ENCODE measurements at regions of chr6 and their contacts with region 1.

Region 1: GRCh38 chr6:132279592-132280139 is 121.6 kb downstream of the MOXD1 start:
- DNase-seq: peak; percentile 65 to 84
- ATAC-seq: peak; percentile 85 to 95 (median 94)
- H3K4me3 ChIP-seq: peak overlapping the region; percentile 19
- H3K4me3 Mint-ChIP-seq: peak overlapping the region; percentile 90
- H3K27ac ChIP-seq: no peak overlapping the region
- H3K27ac Mint-ChIP-seq: peak overlapping the region in 1 of 2 donors; percentile 47
- H3K4me1 ChIP-seq: no peaks in the 10 kb centered on the region
- H3K4me1 Mint-ChIP-seq: peaks cover 0 to 5% of the 10 kb centered on the region in 2 donors
- H3K27me3 ChIP-seq: peaks cover 3% of the 10 kb centered on the region
- H3K27me3 Mint-ChIP-seq: peaks cover 27 to 34% of the 10 kb centered on the region in 2 donors
- CTCF ChIP-seq: peak; percentile 99

Region 2: DNA sequence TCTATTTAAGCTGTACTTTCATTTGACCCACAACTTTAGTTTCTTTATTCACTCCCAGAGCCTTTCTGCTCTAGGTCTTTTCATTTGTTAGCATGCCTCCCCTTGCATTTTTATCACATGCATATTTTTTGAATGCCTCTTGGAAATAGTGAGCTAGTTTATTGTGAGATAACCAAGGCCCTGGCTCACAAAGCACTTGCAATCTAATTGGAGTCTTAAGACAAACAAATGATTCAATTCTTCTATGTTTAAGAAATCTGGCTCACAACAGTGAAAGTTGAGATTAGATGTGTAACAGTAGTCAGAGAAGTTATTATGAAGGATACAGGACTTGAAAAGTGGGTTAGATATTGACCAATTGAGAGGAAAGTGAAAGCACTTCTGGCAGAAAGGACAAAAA is 51.8 kb before region 1 on chr6:
- intact Hi-C with region 1: no loop called
- DNase-seq: no peak
- ATAC-seq: no peak
- H3K4me3 ChIP-seq: no peak overlapping the region
- H3K4me3 Mint-ChIP-seq: no peak overlapping the region
- H3K27ac ChIP-seq: no peak overlapping the region
- H3K27ac Mint-ChIP-seq: no peak overlapping the region
- H3K4me1 ChIP-seq: no peaks in the 10 kb centered on the region
- H3K4me1 Mint-ChIP-seq: no peaks in the 10 kb centered on the region
- H3K27me3 ChIP-seq: peaks cover 3% of the 10 kb centered on the region
- H3K27me3 Mint-ChIP-seq: no peaks in the 10 kb centered on the region
- CTCF ChIP-seq: no peak

Region 3: DNA sequence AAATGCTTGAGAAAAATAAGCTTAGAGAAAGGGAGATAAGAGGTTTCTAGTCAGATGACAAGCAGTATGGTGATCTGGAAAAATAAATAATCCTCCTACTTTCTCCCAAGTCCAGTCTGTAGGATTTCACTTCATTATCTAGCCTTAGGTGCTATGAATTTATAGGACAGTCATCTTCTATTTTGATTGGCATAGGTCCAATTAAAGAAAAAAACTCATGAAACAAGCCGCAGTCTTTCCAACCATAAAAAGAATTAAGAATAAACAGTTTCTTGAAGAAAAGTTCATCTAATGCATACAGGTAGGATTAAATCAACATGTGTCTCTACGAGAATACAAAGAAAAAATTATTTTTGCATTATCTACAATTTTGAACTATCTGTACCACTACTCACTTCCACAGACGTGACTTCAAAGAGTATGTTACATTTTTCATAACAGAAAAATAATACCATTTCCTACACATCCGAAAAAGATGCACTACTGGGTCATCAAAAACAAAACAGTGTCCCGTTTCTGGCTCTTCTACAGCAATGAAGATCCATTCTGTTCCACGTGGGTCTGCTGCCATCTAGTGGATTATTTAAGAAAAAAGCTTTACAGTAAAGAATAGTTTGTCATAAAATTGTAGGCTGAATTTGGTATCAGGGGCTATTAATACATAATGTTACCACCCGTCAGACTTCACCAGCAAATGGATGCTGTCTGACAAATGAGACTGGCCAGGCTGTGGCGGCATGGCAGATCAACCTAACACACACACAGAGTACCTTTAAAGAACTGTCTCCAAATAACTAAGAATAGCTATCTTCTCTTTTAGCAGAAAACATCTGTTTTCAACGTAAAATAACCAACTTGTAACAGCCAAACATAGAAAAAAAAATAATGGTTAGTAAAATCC is 204.4 kb after region 1 on chr6:
- intact Hi-C with region 1: loop called (anchors 1 kb)
- DNase-seq: peak in 1 of 2 donors; percentile 81
- ATAC-seq: peak; percentile 78 to 89 (median 85)
- H3K4me3 ChIP-seq: no peak overlapping the region
- H3K4me3 Mint-ChIP-seq: no peak overlapping the region
- H3K27ac ChIP-seq: no peak overlapping the region
- H3K27ac Mint-ChIP-seq: no peak overlapping the region
- H3K4me1 ChIP-seq: no peaks in the 10 kb centered on the region
- H3K4me1 Mint-ChIP-seq: peaks cover 14 to 35% of the 10 kb centered on the region in 2 donors
- H3K27me3 ChIP-seq: no peaks in the 10 kb centered on the region
- H3K27me3 Mint-ChIP-seq: no peaks in the 10 kb centered on the region
- CTCF ChIP-seq: peak; percentile 86

Measured in natural killer cell (primary cell).